Caco-2 (cell line): ENCODE measurements at regions of chr3 and their contacts with region 1.

Region 1: GRCh38 chr3:128095222-128095703 is 28.3 kb downstream of the RUVBL1 start:
- DNase-seq: peak; percentile 70 to 82
- H3K4me3 ChIP-seq: no peak overlapping the region
- H3K4me3 Mint-ChIP-seq: no peak overlapping the region
- H3K27ac Mint-ChIP-seq: no peak overlapping the region
- H3K4me1 ChIP-seq: peaks cover 18% of the 10 kb centered on the region; the same call in 1 of the 2 replicates
- H3K4me1 Mint-ChIP-seq: peaks cover 15% of the 10 kb centered on the region
- H3K27me3 ChIP-seq: no peaks in the 10 kb centered on the region
- H3K27me3 Mint-ChIP-seq: no peaks in the 10 kb centered on the region
- CTCF ChIP-seq: peak; percentile 71 to 77

Region 2: GRCh38 chr3:128084391-128084963 is 10.8 kb before region 1 on chr3:
- CTCF ChIA-PET with region 1: interaction called, 4 read pairs
- POLR2A ChIA-PET with region 1: no interaction called
- intact Hi-C with region 1: loop called (anchors 2 kb)
- DNase-seq: peak in 1 of 2 experiments; percentile 29
- H3K4me3 ChIP-seq: no peak overlapping the region
- H3K4me3 Mint-ChIP-seq: no peak overlapping the region
- H3K27ac Mint-ChIP-seq: no peak overlapping the region
- H3K4me1 ChIP-seq: peaks cover 5% of the 10 kb centered on the region; the same call in 1 of the 2 replicates
- H3K4me1 Mint-ChIP-seq: peaks cover 6% of the 10 kb centered on the region
- H3K27me3 ChIP-seq: no peaks in the 10 kb centered on the region
- H3K27me3 Mint-ChIP-seq: no peaks in the 10 kb centered on the region
- CTCF ChIP-seq: no peak

Region 3: GRCh38 chr3:128123538-128124368 is 28.5 kb after region 1 on chr3 and contains the start of gene RUVBL1:
- CTCF ChIA-PET with region 1: interaction called, 10 read pairs
- POLR2A ChIA-PET with region 1: no interaction called
- intact Hi-C with region 1: no loop called
- DNase-seq: peak; percentile 97
- H3K4me3 ChIP-seq: peak within 1 kb of the TSS; percentile 97
- H3K4me3 Mint-ChIP-seq: peak within 1 kb of the TSS; percentile 94
- H3K27ac Mint-ChIP-seq: peak within 1 kb of the TSS; percentile 96
- H3K4me1 ChIP-seq: peaks cover 6% of the 10 kb centered on the region; the same call in 1 of the 2 replicates
- H3K4me1 Mint-ChIP-seq: peaks cover 18% of the 10 kb centered on the region
- H3K27me3 ChIP-seq: no peaks in the 10 kb centered on the region
- H3K27me3 Mint-ChIP-seq: no peaks in the 10 kb centered on the region
- CTCF ChIP-seq: no peak
- total RNA-seq, gene RUVBL1: 53.3 and 56.4 TPM in 2 replicates

Region 4: DNA sequence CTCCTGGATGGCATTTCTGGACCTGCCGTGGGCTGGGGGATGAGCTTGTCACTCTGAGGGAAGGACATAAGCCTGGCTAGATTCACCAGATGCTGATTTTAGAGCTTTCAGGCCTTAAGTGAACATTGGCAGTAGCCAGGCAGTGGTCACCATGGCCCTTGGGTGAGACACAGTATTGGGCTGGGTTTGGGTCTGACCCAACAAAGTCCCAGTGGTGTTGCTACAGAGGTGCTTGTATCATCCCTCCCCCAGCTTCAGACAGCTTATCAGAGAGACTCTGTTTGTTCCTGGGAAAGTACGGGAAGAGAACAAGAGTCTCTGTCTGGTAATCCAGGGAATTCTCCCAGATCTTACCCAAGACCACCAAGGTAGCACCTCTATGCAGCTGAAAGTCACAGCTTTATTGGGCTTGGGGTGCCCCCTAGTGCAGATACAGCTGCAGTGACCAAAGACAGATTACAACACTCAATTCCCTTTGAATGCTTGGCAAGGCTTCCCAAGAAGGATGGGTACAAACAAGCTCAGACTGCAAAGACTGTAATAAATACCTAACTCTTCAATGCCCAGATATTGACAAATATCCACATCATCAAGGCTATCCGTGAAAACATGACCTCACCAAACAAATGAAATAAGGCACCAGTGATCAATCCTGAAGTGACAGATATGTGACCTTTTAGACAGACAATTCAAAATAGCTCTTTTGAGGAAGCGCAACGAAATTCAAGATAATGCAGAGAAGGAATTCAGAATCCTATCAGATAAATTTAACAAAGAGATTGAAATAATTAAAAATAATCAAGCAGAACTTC is 38.2 kb after region 1 on chr3:
- CTCF ChIA-PET with region 1: interaction called, 12 read pairs
- POLR2A ChIA-PET with region 1: interaction called, 3 read pairs
- intact Hi-C with region 1: loop called (anchors 1 kb)
- DNase-seq: peak in 1 of 2 experiments; percentile 63
- H3K4me3 ChIP-seq: no peak overlapping the region
- H3K4me3 Mint-ChIP-seq: no peak overlapping the region
- H3K27ac Mint-ChIP-seq: no peak overlapping the region
- H3K4me1 ChIP-seq: no peaks in the 10 kb centered on the region
- H3K4me1 Mint-ChIP-seq: no peaks in the 10 kb centered on the region
- H3K27me3 ChIP-seq: no peaks in the 10 kb centered on the region
- H3K27me3 Mint-ChIP-seq: peaks cover 7% of the 10 kb centered on the region
- CTCF ChIP-seq: peak; percentile 46 to 59

Region 5: DNA sequence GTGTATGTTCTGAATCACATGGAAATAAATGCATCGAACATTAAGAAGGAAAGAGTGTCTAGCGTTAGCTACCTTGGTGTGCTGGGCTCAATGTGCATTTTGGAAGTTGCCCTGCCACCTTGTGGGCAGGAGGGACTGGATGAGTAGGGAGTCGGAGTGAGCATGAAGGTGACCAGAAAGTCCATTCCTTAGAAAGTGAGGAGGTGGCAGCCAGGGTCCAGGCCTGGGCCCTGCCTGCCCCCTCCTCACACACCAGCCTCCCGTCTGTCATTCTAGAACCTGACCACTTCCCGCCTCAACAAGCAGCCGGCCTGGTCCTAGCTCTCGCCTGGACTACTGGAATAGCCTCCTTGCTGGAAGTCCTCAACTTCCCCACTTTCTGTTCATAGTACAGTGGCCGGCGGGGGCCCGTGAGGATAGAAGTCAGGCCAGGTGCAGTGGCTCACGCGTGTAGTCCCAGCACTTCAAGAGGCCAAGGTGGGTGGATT is 407.9 kb after region 1 on chr3:
- CTCF ChIA-PET with region 1: no interaction called
- POLR2A ChIA-PET with region 1: no interaction called
- intact Hi-C with region 1: loop called (anchors 5 kb)
- DNase-seq: peak in 1 of 2 experiments; percentile 54
- H3K4me3 ChIP-seq: no peak overlapping the region
- H3K4me3 Mint-ChIP-seq: no peak overlapping the region
- H3K27ac Mint-ChIP-seq: no peak overlapping the region
- H3K4me1 ChIP-seq: peaks cover 16% of the 10 kb centered on the region
- H3K4me1 Mint-ChIP-seq: peaks cover 8% of the 10 kb centered on the region
- H3K27me3 ChIP-seq: no peaks in the 10 kb centered on the region
- H3K27me3 Mint-ChIP-seq: no peaks in the 10 kb centered on the region
- CTCF ChIP-seq: peak in 1 of 2 experiments; percentile 59